Caco-2 (cell line): ENCODE measurements at regions of chr15 and their contacts with region 1.

Region 1: DNA sequence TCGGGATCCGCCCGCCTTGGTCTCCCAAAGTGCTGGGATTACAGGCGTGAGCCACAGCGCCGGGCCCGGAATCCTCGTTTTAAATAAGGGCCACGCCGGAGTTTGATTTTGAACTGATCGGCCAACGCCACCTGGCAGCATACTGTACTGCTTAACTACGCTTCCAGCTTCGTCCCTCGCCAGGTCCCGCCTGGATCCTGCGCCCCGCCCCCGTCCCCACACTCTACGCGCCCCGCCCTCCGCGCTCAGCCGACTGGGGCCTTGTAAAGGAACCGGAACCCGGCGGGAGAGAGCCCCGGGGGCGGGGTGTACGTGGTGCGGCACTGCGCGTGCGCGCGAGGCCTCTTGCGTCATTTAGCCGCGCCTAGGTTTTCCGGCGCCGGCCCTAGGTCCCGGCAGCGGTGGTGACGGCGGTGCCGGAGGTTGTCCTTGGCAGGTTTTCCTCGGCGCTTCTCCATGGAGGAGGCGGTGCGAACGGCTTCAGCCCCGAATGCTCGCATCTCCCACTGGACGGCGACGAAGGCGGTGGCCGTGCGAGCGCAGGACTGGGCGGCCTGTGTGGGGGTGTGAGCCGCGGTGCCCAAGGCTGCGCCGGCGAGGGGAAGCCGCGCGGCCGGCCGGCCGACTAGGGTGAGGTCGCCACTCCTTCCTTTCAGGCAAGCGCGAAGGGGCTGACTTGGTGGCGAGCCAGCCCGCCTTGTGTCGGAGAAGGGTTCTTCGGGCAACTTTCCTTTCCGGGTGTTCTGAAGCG is at the start of gene NIPA2:
- DNase-seq: peak; percentile 99 to 100
- H3K4me3 ChIP-seq: peak within 1 kb of the TSS; percentile 88
- H3K4me3 Mint-ChIP-seq: peak within 1 kb of the TSS; percentile 86
- H3K27ac Mint-ChIP-seq: peak within 1 kb of the TSS; percentile 94
- H3K4me1 ChIP-seq: peaks cover 8% of the 10 kb centered on the region
- H3K4me1 Mint-ChIP-seq: peaks cover 11% of the 10 kb centered on the region
- H3K27me3 ChIP-seq: no peaks in the 10 kb centered on the region
- H3K27me3 Mint-ChIP-seq: no peaks in the 10 kb centered on the region
- CTCF ChIP-seq: peak in 1 of 2 experiments; percentile 14
- total RNA-seq, gene NIPA2: 85.3 and 89.4 TPM in 2 replicates

Region 2: DNA sequence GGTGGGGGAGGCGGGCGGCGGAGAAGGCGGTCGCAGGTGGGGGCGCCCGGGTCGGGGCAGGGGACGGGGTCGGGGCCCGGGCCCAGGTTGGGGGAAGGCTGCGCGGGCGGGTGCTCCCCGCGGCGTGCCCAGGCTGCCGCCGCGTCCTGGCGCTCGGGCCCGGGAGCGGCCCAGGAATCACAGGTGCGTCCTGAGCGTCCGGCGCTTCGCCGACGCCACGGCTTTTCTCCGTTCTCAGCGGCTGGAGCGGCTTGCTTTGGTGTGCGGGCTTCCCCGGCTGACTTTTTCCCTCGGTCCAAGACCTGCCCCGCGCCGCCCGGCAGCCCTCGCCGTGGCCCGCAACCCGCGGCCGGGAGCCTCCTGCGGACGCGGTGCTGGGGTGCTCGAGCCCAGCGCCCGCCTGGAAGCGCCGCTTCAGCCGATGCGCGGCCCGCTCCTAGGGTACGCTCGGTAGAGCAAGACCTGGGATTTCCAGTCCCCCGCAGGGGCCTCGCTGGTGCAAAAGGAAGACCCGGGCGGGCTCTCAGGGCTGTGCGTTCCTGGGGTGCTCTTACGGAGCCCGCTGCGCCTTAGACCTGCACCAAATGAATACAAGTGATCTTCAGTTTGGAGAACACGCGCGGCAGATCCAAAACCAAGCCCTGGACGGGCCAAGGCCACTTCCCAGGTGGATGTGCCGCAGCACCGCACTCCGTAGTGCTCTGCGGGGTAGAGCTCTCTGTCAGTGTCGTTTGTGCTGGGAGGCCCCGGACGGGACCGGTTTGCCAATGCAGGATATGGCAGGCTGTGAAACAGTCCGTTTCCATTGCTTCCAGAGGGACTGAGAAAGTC is 51.4 kb before region 1 on chr15:
- CTCF ChIA-PET with region 1: no interaction called
- POLR2A ChIA-PET with region 1: interaction called, 3 read pairs
- intact Hi-C with region 1: loop called (anchors 5 kb)
- DNase-seq: peak in 1 of 2 experiments; percentile 61
- H3K4me3 ChIP-seq: peak overlapping the region; percentile 91
- H3K4me3 Mint-ChIP-seq: peak overlapping the region; percentile 91
- H3K27ac Mint-ChIP-seq: peak overlapping the region; percentile 89
- H3K4me1 ChIP-seq: peaks cover 5% of the 10 kb centered on the region; the same call in 1 of the 2 replicates
- H3K4me1 Mint-ChIP-seq: peaks cover 12% of the 10 kb centered on the region
- H3K27me3 ChIP-seq: no peaks in the 10 kb centered on the region
- H3K27me3 Mint-ChIP-seq: no peaks in the 10 kb centered on the region
- CTCF ChIP-seq: no peak